ENCODE measurements at regions of chr17 and their contacts with region 1.

Region 1: DNA sequence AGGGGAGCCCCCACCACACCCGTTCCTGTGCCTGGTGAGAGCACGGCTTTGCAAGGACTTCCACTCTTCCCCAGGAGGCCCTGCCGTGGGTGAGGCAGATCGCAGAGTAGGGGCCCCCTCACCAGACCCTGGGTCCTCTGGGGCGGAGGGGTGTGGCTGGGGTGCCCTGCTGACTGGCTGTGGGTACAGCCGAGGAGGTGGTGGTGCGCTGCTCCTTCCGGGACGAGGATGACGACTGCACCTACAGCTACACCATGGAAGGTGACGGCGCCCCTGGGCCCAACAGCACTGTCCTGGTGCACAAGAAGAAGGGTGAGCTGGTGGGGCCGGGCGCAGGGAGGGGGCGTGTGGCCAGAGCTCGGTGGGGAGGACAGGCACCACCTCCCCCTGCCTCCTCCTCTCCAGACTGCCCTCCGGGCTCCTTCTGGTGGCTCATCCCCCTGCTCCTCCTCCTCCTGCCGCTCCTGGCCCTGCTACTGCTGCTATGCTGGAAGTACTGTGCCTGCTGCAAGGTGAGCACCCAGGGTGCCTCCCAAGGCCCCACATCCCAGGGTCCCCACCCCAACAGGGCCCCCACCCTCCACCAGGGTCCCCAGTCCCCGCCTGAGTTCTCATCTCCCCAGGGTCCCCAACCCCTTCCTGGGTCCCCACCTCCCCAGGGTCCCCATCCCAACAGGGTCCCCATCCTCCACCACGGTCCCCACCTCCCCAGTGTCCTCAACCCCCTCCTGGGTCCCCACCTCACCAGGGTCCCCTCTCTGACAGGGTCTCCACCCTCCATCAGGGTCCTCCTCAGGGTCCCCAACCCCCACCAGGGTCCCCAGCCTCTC is 16.1 kb downstream of the ITGB4 start:
- DNase-seq: no peak
- H3K27ac ChIP-seq: peak overlapping the region; percentile 98
- CTCF ChIP-seq: no peak

Region 2: DNA sequence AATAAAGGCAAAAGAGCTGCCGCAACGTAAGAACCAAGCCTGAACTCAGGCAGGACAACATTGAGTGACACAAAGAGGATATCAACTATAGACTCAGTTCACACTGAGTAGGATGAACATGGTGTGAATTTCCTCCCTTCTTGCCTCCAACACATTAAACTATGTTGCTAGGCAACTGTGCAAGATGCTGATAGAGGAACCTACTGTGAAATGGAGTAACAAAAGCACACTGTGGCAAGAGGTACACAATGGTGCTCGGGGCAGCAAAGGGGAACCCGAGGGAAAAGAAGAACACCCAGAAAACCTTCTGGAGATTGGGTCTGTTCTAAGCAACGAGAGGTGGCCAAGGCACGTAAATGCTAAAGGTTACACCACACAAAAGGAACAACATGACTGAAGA is 366.0 kb before region 1 on chr17:
- CTCF ChIA-PET with region 1: no interaction called
- POLR2A ChIA-PET with region 1: no interaction called
- DNase-seq: no peak
- H3K27ac ChIP-seq: no peak overlapping the region
- CTCF ChIP-seq: no peak

Region 3: DNA sequence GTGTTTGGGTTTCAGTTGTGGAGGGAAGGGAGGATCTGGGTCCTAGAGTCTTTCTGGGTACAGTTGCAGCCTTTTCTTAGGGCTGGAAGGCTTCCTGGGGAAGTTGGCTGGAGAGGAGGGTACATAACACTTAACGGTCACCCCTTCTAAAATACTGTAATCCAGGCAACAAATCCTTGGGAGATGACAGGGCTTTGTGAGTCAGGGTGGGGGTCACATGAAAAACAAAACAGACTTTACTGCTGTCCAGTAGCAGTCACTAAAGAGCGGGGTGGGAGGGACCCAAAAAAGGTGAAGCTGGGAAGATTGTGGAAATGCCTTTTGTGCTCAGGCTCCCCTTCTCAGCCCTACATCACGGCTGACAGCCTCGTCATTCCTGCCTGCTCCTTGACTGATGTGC is 63.9 kb before region 1 on chr17:
- CTCF ChIA-PET with region 1: interaction called, 3 read pairs
- POLR2A ChIA-PET with region 1: interaction called, 10 read pairs
- DNase-seq: no peak
- H3K27ac ChIP-seq: peak overlapping the region; percentile 47
- CTCF ChIP-seq: no peak

Region 4: DNA sequence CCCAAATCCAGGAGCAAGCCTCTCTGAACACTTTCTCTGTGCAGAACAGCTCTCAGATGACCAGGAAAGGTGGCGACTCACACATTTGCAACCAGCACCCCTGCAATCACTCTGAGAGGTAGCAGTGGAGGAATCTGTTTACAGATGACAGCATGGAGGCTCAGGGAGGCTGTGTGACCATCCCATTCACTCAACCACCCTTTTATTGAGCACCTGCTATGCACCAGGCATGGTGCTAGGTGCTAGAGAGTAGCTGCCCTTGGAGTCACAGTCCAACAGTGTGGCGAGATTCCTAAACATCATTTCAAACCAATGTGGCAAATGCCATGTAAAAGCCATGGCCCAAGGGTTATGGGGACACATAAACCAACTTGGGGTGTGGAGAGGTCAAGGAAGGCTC is 17.6 kb before region 1 on chr17:
- CTCF ChIA-PET with region 1: no interaction called
- POLR2A ChIA-PET with region 1: no interaction called
- DNase-seq: no peak
- H3K27ac ChIP-seq: peak overlapping the region; percentile 98
- CTCF ChIP-seq: no peak